ENCODE measurements at regions of chr1 and their contacts with region 1.

Region 1: DNA sequence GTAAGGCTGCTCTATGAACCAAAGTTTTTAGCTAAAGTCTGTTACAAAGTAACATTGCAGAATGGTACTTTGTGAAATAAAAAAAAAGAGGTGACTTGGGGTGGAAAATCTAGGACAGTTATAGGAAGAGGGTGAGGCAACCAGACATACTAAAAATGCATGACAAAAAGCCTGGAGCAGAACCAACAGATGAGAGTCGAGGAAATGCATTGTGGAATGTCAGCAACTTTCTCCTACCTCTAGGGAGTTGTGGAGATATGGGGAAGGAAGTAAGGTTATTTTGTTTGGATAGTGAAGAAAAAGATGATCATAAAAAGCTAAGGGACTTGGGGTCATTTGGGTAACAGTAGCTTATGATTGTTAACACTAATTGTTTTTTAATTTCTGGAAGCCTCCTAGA is 295.6 kb downstream of the S1PR1 start:
- DNase-seq: no peak
- H3K4me3 ChIP-seq: no peak overlapping the region
- H3K27ac ChIP-seq: no peak overlapping the region
- H3K27me3 ChIP-seq: no peaks in the 10 kb centered on the region
- CTCF ChIP-seq: no peak

Region 2: GRCh38 chr1:101797740-101798139 is 265.4 kb after region 1 on chr1:
- CTCF ChIA-PET with region 1: no interaction called
- POLR2A ChIA-PET with region 1: interaction called, 12 read pairs
- DNase-seq: no peak
- H3K4me3 ChIP-seq: no peak overlapping the region
- H3K27ac ChIP-seq: no peak overlapping the region
- H3K27me3 ChIP-seq: no peaks in the 10 kb centered on the region
- CTCF ChIP-seq: no peak